Panc1 (cell line): ENCODE measurements at regions of chr15 and their contacts with region 1.

Region 1: DNA sequence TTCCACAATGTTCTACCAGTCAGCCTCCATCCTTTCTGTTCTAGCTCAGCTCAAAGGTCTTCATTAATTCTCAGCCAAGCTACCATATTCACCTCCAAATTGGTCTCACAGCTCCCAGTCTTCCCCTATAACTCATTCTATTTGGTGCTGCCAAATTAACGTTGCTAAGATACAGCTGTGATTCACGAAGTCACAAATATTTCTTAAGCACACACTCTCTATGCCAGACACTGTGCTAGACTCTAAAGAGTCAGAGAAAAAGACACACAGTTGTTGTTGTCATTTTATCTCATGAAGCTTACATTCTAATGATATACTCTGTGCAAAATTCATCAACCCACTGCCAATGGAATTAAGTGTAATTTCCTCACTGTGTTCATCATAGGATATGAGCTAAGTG is 102.8 kb downstream of the FRMD5 start:
- DNase-seq: no peak
- ATAC-seq: peak; percentile 52; the same call in 1 of the 2 replicates
- H3K4me3 ChIP-seq: no peak overlapping the region
- H3K27ac ChIP-seq: peak overlapping the region; percentile 29; the same call in 1 of the 2 replicates
- H3K4me1 ChIP-seq: peaks cover 27% of the 10 kb centered on the region
- H3K27me3 ChIP-seq: no peaks in the 10 kb centered on the region
- CTCF ChIP-seq: no peak

Region 2: DNA sequence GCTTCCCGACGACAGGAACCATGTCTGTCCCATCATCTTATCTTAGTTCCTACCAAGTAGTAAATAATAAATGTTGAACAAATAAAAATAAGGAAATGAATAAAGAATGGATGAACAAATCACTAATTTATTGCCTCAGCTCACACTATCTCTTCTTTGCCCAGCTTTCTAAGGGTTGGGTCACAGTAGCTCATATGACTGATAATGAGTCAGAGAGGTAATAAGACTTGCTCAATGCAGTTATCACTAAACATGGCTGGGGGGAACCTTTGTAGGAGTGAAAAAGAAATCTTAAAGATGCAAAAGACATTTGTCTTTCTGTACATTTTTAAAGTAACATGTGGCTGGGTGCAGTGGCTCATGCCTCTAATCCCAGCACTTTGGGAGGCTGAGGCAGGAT is 83.2 kb before region 1 on chr15:
- CTCF ChIA-PET with region 1: interaction called, 11 read pairs
- POLR2A ChIA-PET with region 1: no interaction called
- in situ Hi-C with region 1: no loop called
- intact Hi-C with region 1: no loop called
- DNase-seq: no peak
- ATAC-seq: peak; percentile 84
- H3K4me3 ChIP-seq: no peak overlapping the region
- H3K27ac ChIP-seq: no peak overlapping the region
- H3K4me1 ChIP-seq: no peaks in the 10 kb centered on the region
- H3K27me3 ChIP-seq: no peaks in the 10 kb centered on the region
- CTCF ChIP-seq: no peak